Heart right ventricle (tissue), 16 donors: ENCODE measurements at regions of chr2 and their contacts with region 1.

Region 1: GRCh38 chr2:175690113-175690837 is 311.8 kb downstream of the LNPK start:
- DNase-seq: peak in 1 of 2 donors; percentile 47
- ATAC-seq: peak in 1 of 8 donors; percentile 61
- H3K4me3 ChIP-seq: no peak overlapping the region
- H3K27ac ChIP-seq: no peak overlapping the region
- H3K4me1 ChIP-seq: no peaks in the 10 kb centered on the region
- H3K27me3 ChIP-seq: peaks cover 0 to 55% (median 34%) of the 10 kb centered on the region in 7 donors
- CTCF ChIP-seq: peak in 8 of 9 donors; percentile 55 to 87 (median 76)

Region 2: DNA sequence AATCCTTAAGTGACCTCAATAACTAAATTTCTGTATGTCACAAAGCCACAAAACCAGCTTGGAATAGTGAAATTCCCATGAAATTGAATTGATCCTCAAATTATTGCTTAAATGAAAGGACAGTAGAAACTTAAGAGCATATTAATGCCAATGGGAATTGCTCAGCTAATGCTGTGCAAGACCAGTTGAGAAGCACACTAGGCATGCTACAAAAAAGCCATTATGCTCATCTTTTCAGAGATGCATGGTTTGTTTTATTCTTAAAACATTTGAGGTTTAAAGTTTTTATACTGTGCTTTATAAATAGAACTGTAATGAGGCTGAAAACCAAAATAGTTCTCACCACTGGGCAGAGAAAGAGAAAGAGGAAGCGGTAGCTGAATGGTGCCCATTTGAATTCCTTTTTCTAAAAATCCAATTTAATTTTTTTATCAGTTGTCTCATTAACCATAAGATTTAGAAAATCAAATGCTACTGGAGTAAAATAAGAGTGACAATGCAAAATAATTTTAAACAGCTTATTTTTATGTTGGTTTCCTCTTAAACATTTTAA is 213.2 kb after region 1 on chr2:
- intact Hi-C with region 1: no loop called
- DNase-seq: no peak
- ATAC-seq: peak in 1 of 8 donors; percentile 53
- H3K4me3 ChIP-seq: no peak overlapping the region
- H3K27ac ChIP-seq: no peak overlapping the region
- H3K4me1 ChIP-seq: peaks cover 0 to 14% (median 8%) of the 10 kb centered on the region in 9 donors
- H3K27me3 ChIP-seq: no peaks in the 10 kb centered on the region
- CTCF ChIP-seq: no peak

Region 3: DNA sequence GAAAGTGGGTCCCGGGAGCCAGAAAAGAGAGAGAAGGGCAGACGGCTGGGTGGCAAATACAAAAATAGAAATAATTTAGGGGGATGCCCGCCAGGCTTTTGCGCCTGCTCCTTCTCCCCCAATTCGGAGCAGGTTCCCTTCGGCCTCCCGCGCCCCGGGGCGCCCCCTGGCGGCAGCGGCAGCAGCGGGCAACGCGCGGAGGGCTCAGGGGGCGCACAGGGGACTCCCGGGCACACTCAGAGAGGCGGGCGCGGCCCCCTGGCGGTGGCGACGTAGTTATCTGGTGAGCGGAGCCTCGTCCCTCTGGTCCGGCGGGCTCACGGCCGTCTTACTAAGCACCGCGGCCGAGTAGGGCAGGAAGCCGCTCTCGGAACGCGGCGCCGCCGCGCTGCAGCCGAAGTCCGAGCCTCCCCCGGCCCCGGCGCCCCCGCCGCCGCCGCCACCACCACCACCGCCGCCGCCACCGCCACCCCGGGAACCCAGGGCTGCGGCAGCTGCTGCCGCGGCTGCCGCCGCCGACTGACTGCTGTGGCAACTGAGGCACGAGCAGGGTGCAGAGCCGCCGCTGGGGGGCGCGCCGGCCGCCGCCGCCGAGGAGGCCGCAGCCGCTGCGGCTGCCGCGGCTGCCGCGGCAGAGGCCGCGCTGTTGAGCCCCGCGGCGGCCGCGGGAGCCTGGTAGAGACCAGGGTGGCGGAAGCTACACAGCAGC is 389.7 kb after region 1 on chr2:
- intact Hi-C with region 1: loop called in 6 of 10 experiments (anchors 2 to 5 kb)
- DNase-seq: peak in 1 of 2 donors; percentile 47
- ATAC-seq: peak in 6 of 8 donors; percentile 33 to 80 (median 61)
- H3K4me3 ChIP-seq: peak overlapping the region in 4 of 10 donors; percentile 8 to 31 (median 23)
- H3K27ac ChIP-seq: no peak overlapping the region
- H3K4me1 ChIP-seq: peaks cover 0 to 50% (median 12%) of the 10 kb centered on the region in 9 donors
- H3K27me3 ChIP-seq: peaks cover 72 to 100% (median 98%) of the 10 kb centered on the region in 7 donors
- CTCF ChIP-seq: peak; percentile 25 to 75 (median 70)